ENCODE measurements at regions of chr12 and their contacts with region 1.

Region 1: DNA sequence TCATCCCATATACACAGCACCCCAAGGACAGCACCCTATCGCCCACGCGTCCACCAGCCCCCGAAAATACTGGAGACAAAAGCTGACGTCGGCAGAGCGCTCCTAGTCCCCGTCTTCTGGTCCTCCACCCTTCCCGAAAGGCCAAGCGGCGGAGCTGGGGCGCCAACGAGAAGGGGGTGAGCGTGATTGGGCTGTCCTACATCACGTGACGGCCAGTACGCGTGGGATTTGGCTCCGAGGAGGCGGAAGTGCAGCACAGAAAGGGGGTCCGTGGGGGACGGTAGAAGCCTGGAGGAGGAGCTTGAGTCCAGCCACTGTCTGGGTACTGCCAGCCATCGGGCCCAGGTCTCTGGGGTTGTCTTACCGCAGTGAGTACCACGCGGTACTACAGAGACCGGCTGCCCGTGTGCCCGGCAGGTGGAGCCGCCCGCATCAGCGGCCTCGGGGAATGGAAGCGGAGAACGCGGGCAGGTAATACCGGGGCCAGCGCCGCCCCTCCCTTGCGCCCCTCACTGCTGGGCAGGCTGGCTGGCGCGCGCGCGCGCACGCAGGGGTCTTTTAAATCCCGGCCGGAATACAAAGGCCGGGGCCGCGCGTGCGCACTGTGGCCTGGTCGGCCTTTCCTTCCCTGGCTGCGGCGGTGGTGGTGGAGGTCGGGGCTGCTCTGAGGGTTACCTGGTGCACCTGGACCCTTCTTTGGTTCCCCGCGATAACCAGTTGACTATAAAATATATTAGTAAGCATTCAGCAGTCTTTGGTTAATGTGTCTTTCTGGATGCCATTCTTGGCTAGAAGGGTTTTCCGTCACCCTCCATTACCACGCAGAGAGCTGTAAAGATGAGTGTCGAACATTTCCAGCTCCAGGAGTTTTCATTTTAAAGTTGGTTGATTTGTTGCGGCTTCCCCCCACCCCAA is at the start of gene TDG:
- DNase-seq: peak; percentile 99
- total RNA-seq, gene TDG: 17.4 to 17.6 TPM

Region 2: DNA sequence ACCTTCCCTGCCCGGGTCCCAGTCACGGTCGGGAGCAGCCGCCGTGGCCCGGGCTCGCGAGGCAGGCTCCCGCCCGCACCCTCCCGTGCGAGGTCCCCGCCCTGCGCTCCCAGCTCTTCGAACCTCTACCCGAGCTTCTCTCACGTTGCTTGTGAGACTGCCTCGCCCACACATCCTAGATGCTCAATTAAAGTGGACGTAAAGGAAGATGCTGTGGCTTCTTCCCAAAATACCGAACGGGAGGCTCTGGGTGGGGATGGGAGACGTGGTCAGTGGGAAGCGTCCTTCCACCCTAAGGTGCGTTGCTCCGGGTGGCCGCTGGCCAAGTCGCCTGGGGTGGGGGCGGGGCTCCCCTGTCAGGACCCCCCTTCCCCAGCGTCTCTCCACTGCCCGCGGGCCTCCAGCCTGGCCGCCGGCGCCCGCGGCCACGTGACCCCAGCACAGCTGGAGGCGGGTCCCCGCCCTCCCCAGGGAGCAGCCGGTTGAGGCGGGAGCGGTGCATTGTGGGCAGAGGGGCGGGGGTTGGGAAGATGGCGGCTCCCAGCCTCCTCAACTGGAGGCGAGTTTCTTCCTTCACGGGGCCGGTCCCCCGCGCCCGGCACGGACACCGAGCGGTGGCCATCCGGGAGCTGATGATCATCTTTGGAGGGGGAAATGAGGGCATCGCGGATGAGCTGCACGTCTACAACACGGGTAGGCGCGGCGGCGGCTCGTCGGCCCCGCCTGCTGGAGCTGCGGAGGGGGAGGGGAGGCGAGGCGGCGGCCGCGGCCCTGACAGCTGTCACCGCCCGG is 98.4 kb after region 1 on chr12 and contains the start of gene HCFC2:
- intact Hi-C with region 1: loop called in 1 of 2 experiments (anchors 10 kb)
- DNase-seq: peak; percentile 97
- total RNA-seq, gene HCFC2: 25.1 to 25.2 TPM

Region 3: GRCh38 chr12:105226219-105226618 is 1260.4 kb after region 1 on chr12:
- intact Hi-C with region 1: no loop called
- DNase-seq: peak; percentile 88